Right ventricle myocardium inferior (tissue), 1 donor: ENCODE measurements at regions of chr14 and their contacts with region 1.

Region 1: DNA sequence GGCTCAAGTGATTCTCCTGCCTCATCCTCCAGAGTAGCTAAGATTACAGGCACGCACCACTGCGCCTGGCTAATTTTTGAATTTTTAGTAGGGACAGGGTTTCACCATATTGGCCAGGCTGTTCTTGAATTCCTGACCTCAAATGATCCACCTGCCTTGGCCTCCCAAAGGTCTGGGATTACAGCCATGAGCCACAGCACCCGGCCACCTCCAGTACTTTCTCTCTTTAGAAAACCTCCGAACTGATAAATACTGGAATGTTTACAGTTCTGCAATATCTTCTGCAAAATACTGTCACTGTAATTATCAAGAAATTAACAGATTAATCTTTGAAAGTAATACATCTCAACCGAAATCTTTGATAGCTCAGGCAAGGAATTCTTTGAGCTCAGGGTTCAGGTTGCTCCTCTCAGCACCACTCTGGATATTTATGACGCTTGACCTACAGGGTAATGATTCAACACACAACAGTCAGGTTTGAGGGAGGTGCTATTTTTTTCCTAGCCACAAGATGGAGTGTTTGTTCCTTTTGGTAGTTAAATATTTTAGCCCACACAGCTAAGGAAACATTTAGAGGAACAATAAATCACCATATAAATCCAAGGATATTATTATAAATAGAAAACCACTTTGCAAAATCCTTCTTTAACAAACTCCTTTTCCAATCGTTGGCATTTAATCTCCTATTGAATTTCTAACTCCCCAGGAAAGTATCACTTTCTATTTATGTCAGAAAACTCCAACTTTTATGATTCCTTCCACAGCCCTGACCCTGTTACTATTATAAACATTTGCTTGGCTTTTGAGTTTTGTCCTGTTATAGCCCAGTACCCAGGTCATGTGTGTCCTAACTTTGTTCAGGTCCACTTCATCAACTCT is 48.6 kb upstream of the GTF2A1 start:
- DNase-seq: no peak
- ATAC-seq: peak; percentile 65

Region 2: GRCh38 chr14:81453166-81453766 is 183.9 kb after region 1 on chr14:
- intact Hi-C with region 1: loop called (anchors 1 kb)
- DNase-seq: no peak
- ATAC-seq: no peak